MCF 10A (cell line): ENCODE measurements at regions of chr16 and their contacts with region 1.

Region 1: DNA sequence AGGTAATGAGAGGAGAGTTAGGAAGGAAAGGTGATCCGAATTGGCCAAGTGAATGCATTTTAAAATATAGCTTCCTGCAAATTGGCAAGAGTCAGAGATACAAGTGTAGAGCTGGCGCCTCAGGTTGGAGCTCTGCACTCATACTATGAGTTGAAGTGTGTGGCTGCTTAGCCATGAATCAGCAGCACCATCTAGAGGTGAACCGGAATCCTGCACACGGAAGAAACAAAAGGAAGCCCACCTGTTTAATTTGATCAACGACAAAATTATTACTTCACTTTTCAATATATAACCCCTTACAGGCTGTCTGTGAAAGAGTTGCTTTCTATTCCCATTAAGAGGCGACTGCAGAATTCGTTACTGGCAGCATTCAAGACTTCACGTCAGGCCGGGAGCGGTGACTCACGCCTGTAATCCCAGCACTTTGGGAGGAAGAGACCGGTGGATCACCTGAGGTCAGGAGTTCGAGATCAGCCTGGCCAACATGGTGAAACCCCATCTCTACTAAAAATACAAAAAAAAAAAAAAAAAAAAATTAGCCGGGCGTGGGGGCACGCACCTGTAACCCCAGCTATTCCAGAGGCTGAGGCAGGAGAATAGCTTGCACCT is 1253.7 kb upstream of the CDH8 start:
- DNase-seq: peak; percentile 53
- H3K4me3 Mint-ChIP-seq: no peak overlapping the region
- H3K27ac Mint-ChIP-seq: no peak overlapping the region
- H3K4me1 Mint-ChIP-seq: no peaks in the 10 kb centered on the region
- H3K27me3 Mint-ChIP-seq: no peaks in the 10 kb centered on the region
- CTCF ChIP-seq: peak; percentile 66

Region 2: GRCh38 chr16:62190426-62190825 is 1099.5 kb before region 1 on chr16:
- CTCF ChIA-PET with region 1: interaction called, 18 read pairs
- POLR2A ChIA-PET with region 1: no interaction called
- intact Hi-C with region 1: loop called (anchors 1 kb)
- DNase-seq: peak; percentile 8
- H3K4me3 Mint-ChIP-seq: no peak overlapping the region
- H3K27ac Mint-ChIP-seq: no peak overlapping the region
- H3K4me1 Mint-ChIP-seq: no peaks in the 10 kb centered on the region
- H3K27me3 Mint-ChIP-seq: peaks cover 72% of the 10 kb centered on the region
- CTCF ChIP-seq: peak; percentile 49

Region 3: DNA sequence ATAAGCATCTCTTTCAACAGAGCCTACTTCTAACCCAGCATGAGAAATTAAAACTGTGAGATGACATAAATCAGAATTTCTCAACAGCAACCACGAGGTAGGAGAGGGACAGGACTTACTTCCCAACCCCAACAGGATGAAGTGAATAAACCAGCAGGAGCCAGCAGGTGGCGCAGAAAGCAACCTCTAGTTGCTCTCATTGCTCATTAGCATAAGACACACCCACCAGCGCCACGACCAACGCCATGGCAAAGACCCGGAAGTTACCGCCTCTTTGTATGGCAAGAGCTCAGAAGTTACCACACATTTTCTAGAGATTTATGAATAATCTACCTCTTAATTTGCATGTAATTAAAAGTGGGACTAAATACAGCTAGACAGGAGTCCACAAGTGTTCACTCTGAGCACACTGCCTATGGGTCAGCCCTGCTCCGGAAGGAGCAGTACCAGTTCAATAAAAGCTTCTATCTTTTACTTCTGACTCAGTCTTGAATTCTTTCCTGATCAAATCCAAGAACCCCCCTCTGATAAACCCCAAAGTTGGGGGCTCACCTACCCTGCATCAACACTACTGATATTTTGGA is 1064.2 kb before region 1 on chr16:
- CTCF ChIA-PET with region 1: interaction called, 11 read pairs
- POLR2A ChIA-PET with region 1: no interaction called
- intact Hi-C with region 1: no loop called
- DNase-seq: peak; percentile 81
- H3K4me3 Mint-ChIP-seq: peak overlapping the region; percentile 19
- H3K27ac Mint-ChIP-seq: no peak overlapping the region
- H3K4me1 Mint-ChIP-seq: no peaks in the 10 kb centered on the region
- H3K27me3 Mint-ChIP-seq: no peaks in the 10 kb centered on the region
- CTCF ChIP-seq: peak; percentile 29

Region 4: DNA sequence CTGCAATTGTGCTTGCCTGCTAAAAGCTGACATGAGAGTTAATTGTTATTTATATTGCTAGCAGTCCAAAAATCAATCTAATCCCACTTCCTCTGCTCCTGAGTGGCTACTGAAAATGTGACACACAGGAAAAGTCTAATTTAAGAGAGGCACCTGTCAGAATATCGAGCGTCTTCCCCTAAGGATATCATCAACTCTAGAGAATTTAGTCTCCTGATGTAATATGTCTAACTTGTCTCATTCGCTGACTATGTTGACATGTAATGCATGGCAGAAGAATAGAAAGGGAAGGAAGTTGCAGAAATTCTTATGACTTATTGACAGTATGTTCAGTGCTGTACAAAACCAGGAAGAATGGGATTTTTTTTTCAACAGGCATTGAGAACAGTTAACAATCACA is 360.4 kb before region 1 on chr16:
- CTCF ChIA-PET with region 1: no interaction called
- POLR2A ChIA-PET with region 1: no interaction called
- intact Hi-C with region 1: no loop called
- DNase-seq: no peak
- H3K4me3 Mint-ChIP-seq: no peak overlapping the region
- H3K27ac Mint-ChIP-seq: no peak overlapping the region
- H3K4me1 Mint-ChIP-seq: no peaks in the 10 kb centered on the region
- H3K27me3 Mint-ChIP-seq: peaks cover 24% of the 10 kb centered on the region
- CTCF ChIP-seq: no peak

Region 5: GRCh38 chr16:63752347-63752746 is 462.4 kb after region 1 on chr16:
- CTCF ChIA-PET with region 1: no interaction called
- POLR2A ChIA-PET with region 1: no interaction called
- intact Hi-C with region 1: no loop called
- DNase-seq: no peak
- H3K4me3 Mint-ChIP-seq: no peak overlapping the region
- H3K27ac Mint-ChIP-seq: no peak overlapping the region
- H3K4me1 Mint-ChIP-seq: no peaks in the 10 kb centered on the region
- H3K27me3 Mint-ChIP-seq: no peaks in the 10 kb centered on the region
- CTCF ChIP-seq: no peak